CD8-positive, alpha-beta memory T cell (primary cell): ENCODE measurements at regions of chr2 and their contacts with region 1.

Region 1: GRCh38 chr2:151261231-151261976 is at the start of gene RBM43:
- DNase-seq: peak; percentile 75 to 91 (median 86)
- H3K4me3 ChIP-seq: peak within 1 kb of the TSS; percentile 72
- H3K4me3 Mint-ChIP-seq: peak within 1 kb of the TSS; percentile 83 to 96 (median 94)
- H3K27ac ChIP-seq: peak within 1 kb of the TSS; percentile 98
- H3K27ac Mint-ChIP-seq: peak within 1 kb of the TSS; percentile 89 to 99 (median 98)
- H3K4me1 ChIP-seq: peaks cover 7% of the 10 kb centered on the region
- H3K4me1 Mint-ChIP-seq: peaks cover 30 to 39% (median 36%) of the 10 kb centered on the region in 3 donors
- H3K27me3 ChIP-seq: no peaks in the 10 kb centered on the region
- H3K27me3 Mint-ChIP-seq: peaks cover 0 to 1% of the 10 kb centered on the region in 2 donors
- total RNA-seq, gene RBM43: 2.8 to 3.4 TPM

Region 2: GRCh38 chr2:149587220-149587949 is 1674.0 kb before region 1 on chr2 and contains the start of gene MMADHC:
- CTCF ChIA-PET with region 1: interaction called, 3 read pairs
- POLR2A ChIA-PET with region 1: interaction called, 16 read pairs
- DNase-seq: peak; percentile 86 to 96 (median 91)
- H3K4me3 ChIP-seq: peak within 1 kb of the TSS; percentile 94
- H3K4me3 Mint-ChIP-seq: peak within 1 kb of the TSS; percentile 92 to 99 (median 95)
- H3K27ac ChIP-seq: peak within 1 kb of the TSS; percentile 98
- H3K27ac Mint-ChIP-seq: peak within 1 kb of the TSS; percentile 96 to 100 (median 98)
- H3K4me1 ChIP-seq: peaks cover 42% of the 10 kb centered on the region
- H3K4me1 Mint-ChIP-seq: peaks cover 42 to 56% (median 54%) of the 10 kb centered on the region in 3 donors
- H3K27me3 ChIP-seq: no peaks in the 10 kb centered on the region
- H3K27me3 Mint-ChIP-seq: peaks cover 8 to 31% of the 10 kb centered on the region in 2 donors
- total RNA-seq, gene MMADHC: 149 to 156 TPM

Region 3: DNA sequence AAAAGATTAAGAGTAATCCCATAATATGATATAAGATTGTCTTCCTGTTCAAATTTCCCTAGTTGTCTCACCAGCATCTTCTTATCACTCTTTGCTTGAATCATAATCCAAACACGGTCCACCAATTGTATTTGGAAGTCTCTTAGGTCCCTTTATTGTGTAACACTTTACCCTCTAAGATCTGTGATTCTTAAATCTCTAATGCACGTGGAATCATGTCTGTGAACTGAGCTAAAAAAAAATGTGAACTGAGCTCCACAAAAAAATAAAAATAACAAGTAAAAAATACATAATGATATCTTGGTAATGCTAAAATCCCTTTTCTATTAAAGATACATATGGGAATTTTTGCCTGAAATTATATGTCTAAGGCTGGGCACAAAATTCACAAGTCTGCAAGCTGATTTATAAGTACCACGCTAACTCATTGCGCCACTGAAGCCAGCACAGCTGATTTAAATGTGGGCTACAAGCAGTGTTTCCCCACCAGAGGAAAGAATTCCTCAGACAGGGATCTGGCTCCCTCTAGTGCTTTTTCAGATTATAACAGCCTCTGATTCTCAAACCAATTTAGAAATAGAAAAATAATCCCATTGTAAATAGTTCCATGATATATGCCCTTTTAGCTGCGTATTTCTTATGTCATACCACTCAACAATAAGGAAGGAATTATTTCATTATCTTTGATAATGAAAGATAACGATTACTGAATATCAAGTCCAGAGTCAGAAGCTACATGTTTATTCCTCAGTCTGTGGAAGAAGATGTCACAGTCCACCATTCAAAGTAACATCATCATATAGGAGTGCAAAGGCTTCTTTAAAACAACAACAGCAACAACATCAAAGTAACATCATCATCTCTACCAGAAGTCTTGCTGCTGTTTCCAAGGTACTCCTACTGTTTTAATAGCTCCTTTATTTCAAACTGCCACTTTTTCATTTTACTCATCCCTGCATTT is 22.6 kb before region 1 on chr2:
- CTCF ChIA-PET with region 1: interaction called, 11 read pairs
- POLR2A ChIA-PET with region 1: no interaction called
- DNase-seq: peak in 4 of 5 donors; percentile 9 to 49 (median 36)
- H3K4me3 ChIP-seq: no peak overlapping the region
- H3K4me3 Mint-ChIP-seq: no peak overlapping the region
- H3K27ac ChIP-seq: no peak overlapping the region
- H3K27ac Mint-ChIP-seq: peak overlapping the region in 1 of 8 donors; percentile 24
- H3K4me1 ChIP-seq: no peaks in the 10 kb centered on the region
- H3K4me1 Mint-ChIP-seq: no peaks in the 10 kb centered on the region
- H3K27me3 ChIP-seq: no peaks in the 10 kb centered on the region
- H3K27me3 Mint-ChIP-seq: peaks cover 3 to 5% of the 10 kb centered on the region in 2 donors

Region 4: DNA sequence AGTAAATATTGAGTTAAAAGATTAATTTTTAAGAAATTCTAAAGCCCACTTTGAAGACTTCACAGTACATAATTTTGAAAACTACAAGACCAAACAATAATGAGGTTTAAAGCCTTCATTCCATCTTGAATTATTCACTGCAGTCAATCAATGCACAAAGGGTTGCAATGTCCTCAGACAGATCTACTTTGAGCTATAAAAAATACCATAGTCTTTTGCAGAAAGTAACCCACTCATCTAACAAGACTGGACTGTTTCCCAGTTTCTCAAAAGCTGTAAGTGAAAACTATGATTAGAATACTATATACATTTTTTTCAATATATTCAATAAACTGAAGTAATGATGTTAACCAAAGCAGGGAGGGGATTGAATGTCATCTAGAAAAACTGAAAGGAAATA is 10.4 kb after region 1 on chr2:
- CTCF ChIA-PET with region 1: no interaction called
- POLR2A ChIA-PET with region 1: no interaction called
- DNase-seq: no peak
- H3K4me3 ChIP-seq: no peak overlapping the region
- H3K4me3 Mint-ChIP-seq: no peak overlapping the region
- H3K27ac ChIP-seq: no peak overlapping the region
- H3K27ac Mint-ChIP-seq: no peak overlapping the region
- H3K4me1 ChIP-seq: no peaks in the 10 kb centered on the region
- H3K4me1 Mint-ChIP-seq: peaks cover 0 to 8% (median 2%) of the 10 kb centered on the region in 3 donors
- H3K27me3 ChIP-seq: no peaks in the 10 kb centered on the region
- H3K27me3 Mint-ChIP-seq: peaks cover 0 to 2% of the 10 kb centered on the region in 2 donors